Right cardiac atrium (tissue), 5 donors: ENCODE measurements at regions of chr7 and their contacts with region 1.

Region 1: GRCh38 chr7:112898432-112899290 is 108.5 kb upstream of the TMEM168 start:
- DNase-seq: no peak
- ATAC-seq: peak; percentile 70 to 74
- H3K4me3 ChIP-seq: no peak overlapping the region
- H3K27ac ChIP-seq: no peak overlapping the region
- H3K4me1 ChIP-seq: peaks cover 3% of the 10 kb centered on the region
- H3K27me3 ChIP-seq: no peaks in the 10 kb centered on the region

Region 2: GRCh38 chr7:112550468-112551060 is 348.1 kb before region 1 on chr7:
- intact Hi-C with region 1: loop called in 1 of 4 experiments (anchors 10 kb)
- DNase-seq: no peak
- ATAC-seq: peak; percentile 56 to 71
- H3K4me3 ChIP-seq: no peak overlapping the region
- H3K27ac ChIP-seq: no peak overlapping the region
- H3K4me1 ChIP-seq: no peaks in the 10 kb centered on the region
- H3K27me3 ChIP-seq: no peaks in the 10 kb centered on the region

Region 3: DNA sequence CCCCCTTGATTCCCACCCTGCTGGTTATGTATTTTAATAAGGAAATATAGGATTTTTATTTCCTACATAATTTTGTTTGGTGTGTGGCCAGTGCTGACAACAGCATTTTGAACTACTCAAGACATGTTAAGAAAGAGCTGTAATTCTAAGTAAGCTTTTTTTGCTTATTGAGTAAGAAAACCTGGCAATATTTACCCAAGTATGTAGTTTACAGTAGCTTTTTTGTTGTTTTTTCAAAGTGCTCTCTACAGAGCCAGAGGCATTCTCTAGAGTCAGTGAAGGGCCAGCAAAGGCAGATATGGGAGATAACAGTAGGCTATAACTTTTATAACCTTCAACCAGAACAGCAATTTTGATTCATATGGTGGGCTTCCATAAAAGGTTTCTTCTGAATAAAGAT is 45.2 kb before region 1 on chr7:
- intact Hi-C with region 1: no loop called
- DNase-seq: no peak
- ATAC-seq: peak in 1 of 2 donors; percentile 70
- H3K4me3 ChIP-seq: no peak overlapping the region
- H3K27ac ChIP-seq: no peak overlapping the region
- H3K4me1 ChIP-seq: peaks cover 2% of the 10 kb centered on the region
- H3K27me3 ChIP-seq: no peaks in the 10 kb centered on the region